ENCODE measurements at regions of chr11 and their contacts with region 1.

Region 1: GRCh38 chr11:72793425-72794367 is at the start of gene STARD10:
- DNase-seq: peak; percentile 96
- H3K4me3 Mint-ChIP-seq: peak within 1 kb of the TSS; percentile 89
- H3K27ac Mint-ChIP-seq: peak within 1 kb of the TSS; percentile 97
- H3K4me1 Mint-ChIP-seq: peaks cover 17% of the 10 kb centered on the region
- H3K27me3 Mint-ChIP-seq: no peaks in the 10 kb centered on the region
- CTCF ChIP-seq: peak; percentile 93
- total RNA-seq, gene STARD10: 10.6 and 16.9 TPM in 2 replicates

Region 2: GRCh38 chr11:72772978-72773690 is 20.6 kb before region 1 on chr11:
- CTCF ChIA-PET with region 1: interaction called, 17 read pairs
- POLR2A ChIA-PET with region 1: interaction called, 4 read pairs
- intact Hi-C with region 1: no loop called
- DNase-seq: peak; percentile 62
- H3K4me3 Mint-ChIP-seq: no peak overlapping the region
- H3K27ac Mint-ChIP-seq: peak overlapping the region; percentile 4
- H3K4me1 Mint-ChIP-seq: peaks cover 10% of the 10 kb centered on the region
- H3K27me3 Mint-ChIP-seq: no peaks in the 10 kb centered on the region
- CTCF ChIP-seq: no peak

Region 3: DNA sequence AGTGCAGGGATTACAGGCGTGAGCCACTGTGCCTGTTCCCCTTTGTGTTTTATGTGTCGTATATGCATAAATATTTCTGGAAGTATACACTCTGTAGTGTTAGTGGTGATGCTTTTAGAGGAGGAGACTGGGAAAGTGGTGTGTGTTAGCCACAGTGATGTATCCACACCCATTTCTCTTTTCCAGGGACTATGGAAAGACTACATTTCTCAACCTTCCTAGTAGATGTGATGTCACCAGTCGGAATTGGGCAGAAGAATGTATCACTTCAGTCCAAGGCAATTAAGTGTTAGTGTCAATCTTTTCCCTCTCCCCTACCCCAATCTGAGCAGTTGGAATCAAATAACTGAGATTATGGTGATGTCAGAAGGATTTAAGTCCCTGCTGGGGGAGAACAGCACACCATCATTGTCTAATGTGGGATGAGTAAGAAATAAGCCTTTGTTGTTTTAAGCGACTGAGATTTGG is 14.7 kb after region 1 on chr11:
- CTCF ChIA-PET with region 1: interaction called, 17 read pairs
- POLR2A ChIA-PET with region 1: interaction called, 26 read pairs
- intact Hi-C with region 1: loop called (anchors 1 kb)
- DNase-seq: no peak
- H3K4me3 Mint-ChIP-seq: no peak overlapping the region
- H3K27ac Mint-ChIP-seq: no peak overlapping the region
- H3K4me1 Mint-ChIP-seq: peaks cover 16% of the 10 kb centered on the region
- H3K27me3 Mint-ChIP-seq: no peaks in the 10 kb centered on the region
- CTCF ChIP-seq: no peak

Region 4: GRCh38 chr11:72814286-72815109 is 20.8 kb after region 1 on chr11 and contains the start of gene ATG16L2:
- CTCF ChIA-PET with region 1: interaction called, 17 read pairs
- POLR2A ChIA-PET with region 1: interaction called, 26 read pairs
- intact Hi-C with region 1: loop called (anchors 1 kb)
- DNase-seq: peak; percentile 87
- H3K4me3 Mint-ChIP-seq: peak within 1 kb of the TSS; percentile 100
- H3K27ac Mint-ChIP-seq: peak within 1 kb of the TSS; percentile 98
- H3K4me1 Mint-ChIP-seq: peaks cover 26% of the 10 kb centered on the region
- H3K27me3 Mint-ChIP-seq: no peaks in the 10 kb centered on the region
- CTCF ChIP-seq: no peak
- total RNA-seq, gene ATG16L2: 9.9 and 11.2 TPM in 2 replicates

Region 5: GRCh38 chr11:73077454-73077853 is 283.8 kb after region 1 on chr11:
- CTCF ChIA-PET with region 1: no interaction called
- POLR2A ChIA-PET with region 1: no interaction called
- intact Hi-C with region 1: no loop called
- DNase-seq: no peak
- H3K4me3 Mint-ChIP-seq: no peak overlapping the region
- H3K27ac Mint-ChIP-seq: no peak overlapping the region
- H3K4me1 Mint-ChIP-seq: peaks cover 11% of the 10 kb centered on the region
- H3K27me3 Mint-ChIP-seq: no peaks in the 10 kb centered on the region
- CTCF ChIP-seq: no peak

Measured in MCF 10A (cell line).